ENCODE measurements at regions of chr6 and their contacts with region 1.

Region 1: GRCh38 chr6:106097411-106098231 is 11.5 kb downstream of the PRDM1 start:
- DNase-seq: no peak
- ATAC-seq: peak in 7 of 8 donors; percentile 42 to 77 (median 63)
- H3K4me3 ChIP-seq: peak overlapping the region; percentile 19 to 56 (median 48)
- H3K27ac ChIP-seq: peak overlapping the region; percentile 37 to 89 (median 74)
- H3K4me1 ChIP-seq: peaks cover 0 to 58% (median 9%) of the 10 kb centered on the region in 9 donors
- H3K27me3 ChIP-seq: peaks cover 0 to 61% (median 17%) of the 10 kb centered on the region in 7 donors
- CTCF ChIP-seq: no peak

Region 2: GRCh38 chr6:106223300-106223930 is 125.8 kb after region 1 on chr6:
- intact Hi-C with region 1: loop called in 2 of 10 experiments (anchors 10 kb)
- DNase-seq: peak in 1 of 2 donors; percentile 66
- ATAC-seq: peak in 5 of 8 donors; percentile 62 to 75 (median 63)
- H3K4me3 ChIP-seq: no peak overlapping the region
- H3K27ac ChIP-seq: no peak overlapping the region
- H3K4me1 ChIP-seq: peaks cover 0 to 10% (median 0%) of the 10 kb centered on the region in 9 donors
- H3K27me3 ChIP-seq: no peaks in the 10 kb centered on the region
- CTCF ChIP-seq: peak; percentile 40 to 76 (median 66)